Activated T-helper 1 cell treated with anti-CD3 and anti-CD28 coated beads, Interleukin-12 subunit alpha, Interleukin-12 subunit beta, Interleukin-2, Interleukin-4 antibody, amounts not matched to agents 30 ng/mL and 10 ng/mL and 1 ng/mL, durations not matched to agents 14 hours and 24 hours and 36 hours (primary cell): ENCODE measurements at regions of chr11 and their contacts with region 1.

Region 1: GRCh38 chr11:122697636-122698167 is 42.2 kb downstream of the UBASH3B start:
- DNase-seq: peak; percentile 16
- H3K4me3 Mint-ChIP-seq: peak overlapping the region; percentile 70
- H3K27ac Mint-ChIP-seq: peak overlapping the region; percentile 78
- H3K4me1 Mint-ChIP-seq: peaks cover 45% of the 10 kb centered on the region
- H3K27me3 Mint-ChIP-seq: peaks cover 4% of the 10 kb centered on the region

Region 2: DNA sequence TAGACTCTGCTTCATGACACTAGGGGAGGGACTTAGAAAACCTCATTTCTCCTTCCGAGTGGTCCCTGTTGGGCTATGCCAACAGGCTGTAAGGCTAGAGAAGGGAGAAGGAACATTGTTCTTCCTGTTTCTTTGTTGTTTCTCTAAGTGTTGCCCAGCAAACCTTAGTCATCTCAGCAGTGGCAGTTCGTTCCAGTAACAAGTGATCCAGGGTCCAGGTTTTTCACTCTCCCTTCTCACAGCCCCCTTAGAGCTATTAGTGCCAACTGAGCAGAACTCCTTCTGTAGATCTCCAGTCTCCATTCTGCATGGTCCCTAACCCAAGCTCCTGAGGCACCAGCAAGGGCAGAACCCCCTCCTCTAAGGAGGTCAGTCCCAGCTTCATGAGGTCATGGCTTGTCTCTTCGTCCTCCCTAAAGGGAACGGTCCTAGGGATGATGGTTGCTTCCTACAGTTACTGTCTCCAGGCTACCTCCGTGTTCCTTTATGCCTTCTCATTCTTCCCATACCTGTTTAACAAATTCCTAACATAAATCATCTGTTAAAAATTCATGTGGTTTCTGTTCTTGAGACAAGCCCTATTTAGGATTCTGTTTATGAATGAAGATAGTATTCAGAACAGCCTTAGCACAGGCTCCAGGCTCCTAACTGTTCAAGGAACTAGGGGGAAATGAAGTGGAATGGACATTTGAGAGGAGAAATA is 210.8 kb before region 1 on chr11:
- intact Hi-C with region 1: no loop called
- DNase-seq: no peak
- H3K4me3 Mint-ChIP-seq: no peak overlapping the region
- H3K27ac Mint-ChIP-seq: no peak overlapping the region
- H3K4me1 Mint-ChIP-seq: peaks cover 6% of the 10 kb centered on the region
- H3K27me3 Mint-ChIP-seq: peaks cover 2% of the 10 kb centered on the region

Region 3: GRCh38 chr11:122578168-122578825 is 119.4 kb before region 1 on chr11:
- intact Hi-C with region 1: loop called (anchors 2 kb)
- DNase-seq: no peak
- H3K4me3 Mint-ChIP-seq: no peak overlapping the region
- H3K27ac Mint-ChIP-seq: no peak overlapping the region
- H3K4me1 Mint-ChIP-seq: peaks cover 12% of the 10 kb centered on the region
- H3K27me3 Mint-ChIP-seq: peaks cover 7% of the 10 kb centered on the region

Region 4: DNA sequence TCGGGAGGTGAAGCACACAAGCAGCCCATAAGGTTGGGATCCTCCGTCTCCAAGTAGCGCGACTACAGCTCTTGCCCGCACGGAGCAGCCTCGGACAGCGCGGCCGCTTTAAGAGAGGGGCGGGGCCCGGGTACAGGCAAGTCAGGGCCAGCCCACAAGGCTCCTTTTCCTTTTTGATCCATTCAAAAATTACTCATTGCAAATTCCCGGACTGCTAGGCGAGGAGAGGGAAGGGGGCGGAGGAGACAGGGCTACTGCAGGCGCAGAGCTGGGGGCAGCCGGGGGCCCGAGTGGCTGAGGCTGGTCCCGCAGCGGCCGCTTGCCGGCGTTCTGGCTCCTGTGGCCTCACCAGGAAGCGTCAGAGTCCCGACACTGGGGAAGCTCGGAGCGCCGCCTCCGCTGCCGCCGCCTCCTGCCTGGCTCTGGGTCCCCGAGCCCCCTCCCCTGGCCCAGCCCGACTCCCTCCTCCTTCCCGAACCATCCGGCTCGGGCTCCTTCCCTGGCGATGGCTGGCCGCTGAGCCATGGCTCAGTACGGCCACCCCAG is 42.1 kb before region 1 on chr11 and contains the start of gene UBASH3B:
- intact Hi-C with region 1: loop called (anchors 1 kb)
- DNase-seq: peak; percentile 48
- H3K4me3 Mint-ChIP-seq: peak within 1 kb of the TSS; percentile 94
- H3K27ac Mint-ChIP-seq: peak within 1 kb of the TSS; percentile 88
- H3K4me1 Mint-ChIP-seq: peaks cover 13% of the 10 kb centered on the region
- H3K27me3 Mint-ChIP-seq: peaks cover 65% of the 10 kb centered on the region
- total RNA-seq, gene UBASH3B: 17.9 and 18.3 TPM in 2 replicates

Region 5: DNA sequence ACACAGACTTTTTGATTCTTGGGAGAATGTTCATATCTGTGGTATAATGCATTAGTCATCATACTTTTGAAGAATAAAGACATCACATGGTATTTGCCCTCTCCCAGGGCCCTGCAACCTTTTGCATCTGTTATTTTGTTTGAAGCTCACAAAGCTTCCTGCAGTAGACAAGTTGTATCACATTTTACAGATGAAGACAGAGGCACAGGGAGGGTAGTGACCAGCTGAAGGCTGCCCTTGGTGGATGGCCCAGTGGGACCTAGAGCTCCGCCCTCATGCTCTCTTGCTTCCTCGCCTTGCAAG is 24.2 kb after region 1 on chr11:
- intact Hi-C with region 1: loop called (anchors 1 kb)
- DNase-seq: no peak
- H3K4me3 Mint-ChIP-seq: no peak overlapping the region
- H3K27ac Mint-ChIP-seq: no peak overlapping the region
- H3K4me1 Mint-ChIP-seq: peaks cover 50% of the 10 kb centered on the region
- H3K27me3 Mint-ChIP-seq: peaks cover 12% of the 10 kb centered on the region

Region 6: GRCh38 chr11:122727101-122727929 is 29.6 kb after region 1 on chr11:
- intact Hi-C with region 1: loop called (anchors 1 kb)
- DNase-seq: peak; percentile 19
- H3K4me3 Mint-ChIP-seq: peak overlapping the region; percentile 67
- H3K27ac Mint-ChIP-seq: peak overlapping the region; percentile 87
- H3K4me1 Mint-ChIP-seq: peaks cover 46% of the 10 kb centered on the region
- H3K27me3 Mint-ChIP-seq: peaks cover 3% of the 10 kb centered on the region

Region 7: GRCh38 chr11:122743949-122744348 is 46.2 kb after region 1 on chr11:
- intact Hi-C with region 1: loop called (anchors 1 kb)
- DNase-seq: peak; percentile 75
- H3K4me3 Mint-ChIP-seq: no peak overlapping the region
- H3K27ac Mint-ChIP-seq: no peak overlapping the region
- H3K4me1 Mint-ChIP-seq: no peaks in the 10 kb centered on the region
- H3K27me3 Mint-ChIP-seq: peaks cover 18% of the 10 kb centered on the region

Region 8: GRCh38 chr11:122808478-122808869 is 110.8 kb after region 1 on chr11:
- intact Hi-C with region 1: no loop called
- DNase-seq: no peak
- H3K4me3 Mint-ChIP-seq: peak overlapping the region; percentile 9
- H3K27ac Mint-ChIP-seq: peak overlapping the region; percentile 15
- H3K4me1 Mint-ChIP-seq: peaks cover 29% of the 10 kb centered on the region
- H3K27me3 Mint-ChIP-seq: peaks cover 2% of the 10 kb centered on the region